ENCODE measurements at regions of chr12 and their contacts with region 1.

Region 1: GRCh38 chr12:56987551-56988053 is 18.7 kb downstream of the ZBTB39 start:
- DNase-seq: peak; percentile 84
- H3K4me3 Mint-ChIP-seq: no peak overlapping the region
- H3K27ac Mint-ChIP-seq: no peak overlapping the region
- H3K4me1 Mint-ChIP-seq: peaks cover 25% of the 10 kb centered on the region
- H3K27me3 Mint-ChIP-seq: no peaks in the 10 kb centered on the region
- CTCF ChIP-seq: peak; percentile 89

Region 2: GRCh38 chr12:56763753-56764657 is 223.6 kb before region 1 on chr12:
- CTCF ChIA-PET with region 1: interaction called, 212 read pairs
- POLR2A ChIA-PET with region 1: interaction called, 38 read pairs
- intact Hi-C with region 1: loop called (anchors 1 kb)
- DNase-seq: no peak
- H3K4me3 Mint-ChIP-seq: no peak overlapping the region
- H3K27ac Mint-ChIP-seq: no peak overlapping the region
- H3K4me1 Mint-ChIP-seq: peaks cover 23% of the 10 kb centered on the region
- H3K27me3 Mint-ChIP-seq: no peaks in the 10 kb centered on the region
- CTCF ChIP-seq: no peak

Region 3: GRCh38 chr12:56851462-56851861 is 136.1 kb before region 1 on chr12:
- CTCF ChIA-PET with region 1: interaction called, 14 read pairs
- POLR2A ChIA-PET with region 1: no interaction called
- intact Hi-C with region 1: no loop called
- DNase-seq: no peak
- H3K4me3 Mint-ChIP-seq: no peak overlapping the region
- H3K27ac Mint-ChIP-seq: no peak overlapping the region
- H3K4me1 Mint-ChIP-seq: no peaks in the 10 kb centered on the region
- H3K27me3 Mint-ChIP-seq: no peaks in the 10 kb centered on the region
- CTCF ChIP-seq: no peak

Region 4: DNA sequence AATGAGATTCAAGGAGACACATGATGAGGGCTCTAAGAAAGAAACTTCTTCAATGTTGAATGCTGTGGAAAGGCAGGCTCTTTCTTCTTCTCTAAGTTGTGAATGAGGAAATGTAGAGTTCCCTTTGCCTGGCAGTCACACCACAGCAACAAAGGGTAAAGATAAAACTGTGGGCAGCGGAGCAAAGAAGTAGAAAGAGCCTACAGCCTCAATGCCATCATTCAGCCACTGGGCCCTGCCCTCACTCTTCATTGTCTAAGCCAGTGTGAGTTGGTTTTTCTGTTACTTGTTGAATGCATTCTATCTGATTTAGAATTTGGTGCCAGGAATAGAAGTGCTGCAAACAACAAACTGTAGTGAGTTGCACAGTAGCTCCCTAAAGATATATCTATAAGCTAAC is 65.6 kb before region 1 on chr12:
- CTCF ChIA-PET with region 1: no interaction called
- POLR2A ChIA-PET with region 1: no interaction called
- intact Hi-C with region 1: no loop called
- DNase-seq: no peak
- H3K4me3 Mint-ChIP-seq: no peak overlapping the region
- H3K27ac Mint-ChIP-seq: no peak overlapping the region
- H3K4me1 Mint-ChIP-seq: no peaks in the 10 kb centered on the region
- H3K27me3 Mint-ChIP-seq: no peaks in the 10 kb centered on the region
- CTCF ChIP-seq: no peak

Region 5: GRCh38 chr12:56947633-56948456 is 39.8 kb before region 1 on chr12:
- CTCF ChIA-PET with region 1: interaction called, 7 read pairs
- POLR2A ChIA-PET with region 1: no interaction called
- intact Hi-C with region 1: loop called (anchors 2 kb)
- DNase-seq: peak; percentile 35
- H3K4me3 Mint-ChIP-seq: no peak overlapping the region
- H3K27ac Mint-ChIP-seq: no peak overlapping the region
- H3K4me1 Mint-ChIP-seq: peaks cover 7% of the 10 kb centered on the region
- H3K27me3 Mint-ChIP-seq: no peaks in the 10 kb centered on the region
- CTCF ChIP-seq: no peak